ENCODE measurements at regions of chr3 and their contacts with region 1.

Region 1: GRCh38 chr3:155854141-155854940 is at the start of gene SLC33A1:
- DNase-seq: peak; percentile 99
- H3K4me3 Mint-ChIP-seq: peak within 1 kb of the TSS; percentile 98
- H3K27ac Mint-ChIP-seq: peak within 1 kb of the TSS; percentile 99
- H3K4me1 Mint-ChIP-seq: peaks cover 28% of the 10 kb centered on the region
- H3K27me3 Mint-ChIP-seq: no peaks in the 10 kb centered on the region
- total RNA-seq, gene SLC33A1: 14.7 to 15.2 TPM

Region 2: DNA sequence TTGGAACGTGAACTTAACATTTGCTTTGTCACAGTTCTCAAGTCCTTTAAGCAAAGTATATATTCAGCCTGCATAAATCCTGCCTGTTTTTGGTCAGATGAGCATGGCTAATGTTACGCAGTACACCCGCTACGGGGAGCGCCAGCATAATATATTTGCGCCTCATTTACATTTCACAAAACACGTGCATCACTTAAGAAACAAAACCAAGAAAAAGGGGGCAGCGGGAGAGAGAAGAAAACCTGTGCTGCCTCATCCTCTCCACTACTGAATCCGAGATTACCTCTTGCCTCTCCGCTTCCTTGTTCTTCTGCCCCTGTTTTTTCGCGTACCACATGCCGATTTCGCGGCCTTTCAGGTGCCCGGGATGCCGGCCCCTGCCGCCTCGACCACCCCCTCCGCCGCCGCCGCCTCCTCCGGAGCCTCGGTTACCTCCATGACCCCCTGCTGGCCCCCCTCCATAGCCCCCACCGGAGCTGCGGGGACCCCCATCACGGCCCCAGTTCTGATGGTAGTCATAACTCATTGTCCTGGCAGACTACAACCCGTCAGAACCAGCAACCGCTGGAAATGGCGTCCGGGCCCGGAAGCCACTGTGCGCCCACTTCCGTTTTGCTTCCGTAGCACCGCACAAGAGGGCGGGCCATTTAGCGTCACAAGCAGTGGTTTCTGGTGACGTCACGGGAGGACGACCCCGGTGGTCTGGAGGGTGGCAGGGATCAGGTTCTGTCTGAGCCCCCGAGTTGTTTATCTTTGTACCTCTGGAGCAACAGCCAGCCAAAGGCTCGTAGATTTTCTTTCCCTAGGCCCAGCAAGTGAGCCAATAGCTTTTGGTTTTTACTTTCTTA is 1530.2 kb before region 1 on chr3 and contains the start of gene DHX36:
- CTCF ChIA-PET with region 1: no interaction called
- intact Hi-C with region 1: loop called (anchors 1 kb)
- DNase-seq: peak; percentile 93
- H3K4me3 Mint-ChIP-seq: peak within 1 kb of the TSS; percentile 84
- H3K27ac Mint-ChIP-seq: peak within 1 kb of the TSS; percentile 96
- H3K4me1 Mint-ChIP-seq: peaks cover 31% of the 10 kb centered on the region
- H3K27me3 Mint-ChIP-seq: no peaks in the 10 kb centered on the region
- total RNA-seq, gene DHX36: 58.2 to 62.6 TPM

Region 3: DNA sequence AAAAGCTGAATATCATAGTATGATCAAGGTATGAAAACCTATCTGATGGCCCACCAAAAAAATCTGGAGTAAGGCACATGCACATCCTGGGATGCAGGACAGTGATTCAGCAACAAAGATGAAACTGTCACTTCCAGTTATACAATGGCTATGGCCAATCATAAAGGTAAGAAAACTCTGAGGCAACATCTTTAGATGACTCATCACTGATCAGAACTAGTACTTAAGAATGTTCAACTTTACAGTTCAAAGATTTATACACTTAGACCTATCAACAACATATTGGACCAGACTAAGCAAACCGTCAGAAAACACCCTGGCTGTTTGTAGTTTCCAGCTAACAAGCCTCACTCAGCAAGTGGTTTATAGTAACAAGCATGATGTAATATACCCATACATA is 88.1 kb before region 1 on chr3:
- CTCF ChIA-PET with region 1: no interaction called
- intact Hi-C with region 1: loop called (anchors 1 kb)
- DNase-seq: no peak
- H3K4me3 Mint-ChIP-seq: no peak overlapping the region
- H3K27ac Mint-ChIP-seq: no peak overlapping the region
- H3K4me1 Mint-ChIP-seq: peaks cover 5% of the 10 kb centered on the region
- H3K27me3 Mint-ChIP-seq: no peaks in the 10 kb centered on the region

Region 4: DNA sequence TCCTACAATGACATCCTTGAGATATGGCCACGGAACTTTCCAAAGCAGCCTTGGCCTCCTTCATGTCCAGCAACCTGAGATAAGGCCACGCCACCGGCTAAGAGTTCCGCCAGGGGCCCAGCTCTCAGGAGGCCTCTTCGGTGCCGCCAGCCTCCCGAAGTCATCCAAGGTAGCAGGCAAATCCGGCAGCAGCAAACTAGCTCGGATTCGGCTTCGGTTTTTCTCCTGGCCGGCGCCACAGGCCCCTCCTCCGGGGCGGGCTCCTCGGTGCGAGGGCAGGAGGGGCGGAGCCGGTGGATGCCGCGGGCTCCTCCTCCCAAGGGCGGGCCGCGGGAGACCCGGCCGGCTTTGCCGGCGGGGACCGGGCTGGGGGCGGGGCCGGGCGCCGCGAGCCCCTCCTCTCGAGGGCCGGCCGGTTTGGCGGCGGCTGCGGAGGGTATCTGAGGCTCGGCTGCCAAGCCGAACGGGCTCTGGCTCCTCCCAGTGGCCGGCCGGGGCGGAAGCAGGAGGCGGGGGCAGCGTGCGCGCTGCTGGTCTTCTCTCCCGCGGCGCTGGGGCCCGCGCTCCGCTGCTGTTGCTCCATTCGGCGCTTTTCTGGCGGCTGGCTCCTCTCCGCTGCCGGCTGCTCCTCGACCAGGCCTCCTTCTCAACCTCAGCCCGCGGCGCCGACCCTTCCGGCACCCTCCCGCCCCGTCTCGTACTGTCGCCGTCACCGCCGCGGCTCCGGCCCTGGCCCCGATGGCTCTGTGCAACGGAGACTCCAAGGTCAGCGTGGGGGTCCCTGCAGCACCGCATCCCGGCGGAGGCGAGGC is 16.0 kb after region 1 on chr3 and contains the start of gene GMPS:
- CTCF ChIA-PET with region 1: interaction called, 6 read pairs
- intact Hi-C with region 1: loop called (anchors 1 kb)
- DNase-seq: peak; percentile 94
- H3K4me3 Mint-ChIP-seq: peak within 1 kb of the TSS; percentile 90
- H3K27ac Mint-ChIP-seq: peak within 1 kb of the TSS; percentile 90
- H3K4me1 Mint-ChIP-seq: peaks cover 22% of the 10 kb centered on the region
- H3K27me3 Mint-ChIP-seq: no peaks in the 10 kb centered on the region
- total RNA-seq, gene GMPS: 114 to 123 TPM

Region 5: GRCh38 chr3:155946178-155946577 is 91.8 kb after region 1 on chr3:
- CTCF ChIA-PET with region 1: no interaction called
- intact Hi-C with region 1: no loop called
- DNase-seq: no peak
- H3K4me3 Mint-ChIP-seq: no peak overlapping the region
- H3K27ac Mint-ChIP-seq: no peak overlapping the region
- H3K4me1 Mint-ChIP-seq: no peaks in the 10 kb centered on the region
- H3K27me3 Mint-ChIP-seq: no peaks in the 10 kb centered on the region

Region 6: DNA sequence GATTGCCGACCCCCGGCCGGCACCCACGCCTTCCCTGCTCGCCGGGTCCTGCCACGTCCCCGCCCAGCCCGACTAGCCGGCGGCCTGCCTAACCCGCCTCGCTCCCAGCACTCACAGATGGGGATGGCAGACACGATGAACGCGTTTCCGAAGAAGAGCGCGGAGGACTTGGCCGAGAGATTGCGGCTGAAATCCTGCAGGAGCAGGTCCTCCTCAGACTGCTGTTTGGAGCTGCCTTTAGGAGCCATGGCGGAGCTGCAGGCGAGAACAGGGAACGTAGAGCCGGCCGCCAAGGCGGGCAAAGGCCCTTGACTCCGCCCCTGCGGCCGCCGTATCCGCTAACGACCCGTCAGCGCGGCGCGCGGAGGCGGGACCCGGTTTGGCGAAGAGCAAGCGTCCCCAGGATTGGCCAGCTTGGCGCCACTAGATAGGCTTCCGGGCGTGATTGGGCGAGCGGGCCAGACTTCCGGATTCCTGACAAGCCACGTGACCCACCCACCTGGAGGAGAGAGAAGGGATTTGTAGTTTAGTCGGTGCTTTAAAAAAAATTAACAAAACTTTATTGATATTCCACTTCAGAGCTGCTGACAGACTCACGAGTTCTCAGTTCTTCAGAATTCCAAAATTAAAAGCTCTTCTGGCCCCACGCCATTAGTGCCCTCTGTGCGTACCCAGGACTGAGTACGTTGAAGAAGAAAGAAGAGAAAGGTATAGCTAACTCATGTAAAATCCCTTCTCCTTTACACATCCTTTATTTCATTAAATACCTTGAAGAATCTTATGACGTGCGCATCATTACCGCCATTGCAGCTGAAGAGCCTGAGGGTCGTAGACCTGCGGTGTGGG is 700.7 kb after region 1 on chr3 and contains the start of gene SSR3:
- CTCF ChIA-PET with region 1: no interaction called
- intact Hi-C with region 1: loop called (anchors 1 kb)
- DNase-seq: peak; percentile 99
- H3K4me3 Mint-ChIP-seq: peak within 1 kb of the TSS; percentile 90
- H3K27ac Mint-ChIP-seq: peak within 1 kb of the TSS; percentile 86
- H3K4me1 Mint-ChIP-seq: peaks cover 40% of the 10 kb centered on the region
- H3K27me3 Mint-ChIP-seq: no peaks in the 10 kb centered on the region
- total RNA-seq, gene SSR3: 128 to 138 TPM

Region 7: DNA sequence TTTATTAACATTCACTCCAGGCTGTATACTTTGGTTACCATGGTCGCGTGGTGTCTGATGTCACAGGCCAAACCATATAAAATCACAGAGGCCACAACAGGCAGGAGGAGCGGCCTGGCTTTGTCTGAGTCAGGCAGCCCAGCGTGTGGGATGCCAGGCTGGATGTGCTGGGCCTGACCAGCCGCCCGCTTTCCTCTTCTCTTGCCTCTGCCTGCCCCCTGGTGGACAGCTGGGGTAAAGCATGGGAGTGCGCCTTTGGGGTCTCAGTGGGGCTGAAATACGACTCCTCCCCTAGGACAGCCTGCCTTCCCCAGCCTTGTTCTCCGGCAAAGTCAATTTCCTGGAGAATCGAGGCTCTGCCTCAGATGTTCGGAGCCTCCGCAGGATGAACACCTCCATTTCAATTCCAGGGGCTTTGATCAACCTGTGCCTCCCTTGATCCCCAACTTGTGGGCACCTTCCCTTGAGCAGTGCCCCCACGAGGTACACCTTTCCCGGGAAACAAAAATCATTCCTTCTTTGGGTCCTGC is 1227.4 kb after region 1 on chr3:
- CTCF ChIA-PET with region 1: no interaction called
- intact Hi-C with region 1: loop called (anchors 10 kb)
- DNase-seq: peak; percentile 86
- H3K4me3 Mint-ChIP-seq: no peak overlapping the region
- H3K27ac Mint-ChIP-seq: no peak overlapping the region
- H3K4me1 Mint-ChIP-seq: peaks cover 9% of the 10 kb centered on the region
- H3K27me3 Mint-ChIP-seq: no peaks in the 10 kb centered on the region